ENCODE measurements at regions of chr1 and their contacts with region 1.

Region 1: GRCh38 chr1:116514708-116515525 is 55.9 kb downstream of the CD58 start:
- DNase-seq: peak in 13 of 14 experiments; percentile 23 to 90 (median 52)
- ATAC-seq: peak; percentile 79
- H3K4me3 ChIP-seq: peak overlapping the region; percentile 1
- H3K4me3 Mint-ChIP-seq: peak overlapping the region; percentile 57
- H3K27ac ChIP-seq: peak overlapping the region; percentile 46 to 80
- H3K27ac Mint-ChIP-seq: peak overlapping the region; percentile 90
- H3K4me1 ChIP-seq: peaks cover 59% of the 10 kb centered on the region
- H3K4me1 Mint-ChIP-seq: peaks cover 65% of the 10 kb centered on the region
- H3K27me3 ChIP-seq: no peaks in the 10 kb centered on the region
- H3K27me3 Mint-ChIP-seq: no peaks in the 10 kb centered on the region
- CTCF ChIP-seq: no peak

Region 2: DNA sequence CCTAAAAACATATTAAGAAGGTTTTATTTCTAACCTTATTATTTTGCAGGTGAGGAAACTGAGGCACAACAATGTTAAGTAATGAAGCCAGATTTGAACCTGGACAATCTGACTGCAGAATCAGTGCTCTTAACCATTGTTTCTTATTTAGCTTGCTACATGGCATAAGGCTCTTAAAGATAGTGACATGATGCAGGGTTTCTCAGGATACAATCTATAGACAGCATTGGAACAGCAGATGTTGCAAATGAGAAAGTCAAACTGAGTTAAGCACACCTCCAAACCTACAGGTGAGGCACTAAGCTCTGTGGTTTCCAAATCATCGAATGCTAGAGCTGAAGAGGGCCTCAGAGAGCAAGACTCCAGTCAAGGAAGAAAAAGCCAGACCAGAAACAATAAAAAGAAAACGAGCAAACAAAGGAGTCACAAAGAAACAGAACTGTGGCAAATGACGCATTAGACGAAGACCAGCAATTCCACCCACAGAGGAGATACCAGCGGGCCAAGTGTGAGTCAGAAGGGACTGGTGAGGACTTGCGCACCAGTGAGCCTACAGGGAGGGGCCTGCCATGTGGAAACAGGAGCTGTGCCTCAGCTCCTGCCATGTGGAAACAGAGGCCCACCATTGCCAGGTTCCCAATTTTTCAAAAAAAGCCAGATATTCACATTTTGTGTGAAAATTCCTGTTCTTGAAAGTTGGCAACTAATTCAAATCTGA is 41.5 kb after region 1 on chr1:
- CTCF ChIA-PET with region 1: interaction called, 11 read pairs
- POLR2A ChIA-PET with region 1: interaction called, 3 read pairs
- intact Hi-C with region 1: no loop called
- DNase-seq: peak; percentile 28 to 90 (median 52)
- ATAC-seq: peak; percentile 91
- H3K4me3 ChIP-seq: no peak overlapping the region
- H3K4me3 Mint-ChIP-seq: peak overlapping the region; percentile 0
- H3K27ac ChIP-seq: peak overlapping the region in 1 of 2 donors; percentile 57
- H3K27ac Mint-ChIP-seq: peak overlapping the region; percentile 43
- H3K4me1 ChIP-seq: peaks cover 53% of the 10 kb centered on the region
- H3K4me1 Mint-ChIP-seq: peaks cover 64% of the 10 kb centered on the region
- H3K27me3 ChIP-seq: no peaks in the 10 kb centered on the region
- H3K27me3 Mint-ChIP-seq: no peaks in the 10 kb centered on the region
- CTCF ChIP-seq: no peak

Measured in CD4-positive, alpha-beta T cell (primary cell).